CD8-positive, alpha-beta T cell (primary cell): ENCODE measurements at regions of chr19 and their contacts with region 1.

Region 1: GRCh38 chr19:6737284-6738046 is at the start of gene GPR108:
- DNase-seq: peak; percentile 98 to 100 (median 99)
- ATAC-seq: peak; percentile 74
- H3K4me3 ChIP-seq: peak within 1 kb of the TSS; percentile 83
- H3K4me3 Mint-ChIP-seq: peak within 1 kb of the TSS; percentile 96
- H3K27ac ChIP-seq: peak within 1 kb of the TSS; percentile 80 to 92
- H3K27ac Mint-ChIP-seq: peak within 1 kb of the TSS; percentile 97
- H3K4me1 ChIP-seq: peaks cover 42% of the 10 kb centered on the region
- H3K4me1 Mint-ChIP-seq: peaks cover 34% of the 10 kb centered on the region
- H3K27me3 ChIP-seq: peaks cover 0 to 3% of the 10 kb centered on the region in 2 experiments
- H3K27me3 Mint-ChIP-seq: no peaks in the 10 kb centered on the region
- CTCF ChIP-seq: no peak
- total RNA-seq, gene GPR108: 31.9 to 33.1 TPM

Region 2: GRCh38 chr19:5790573-5791520 is 946.6 kb before region 1 on chr19 and contains the start of gene DUS3L:
- CTCF ChIA-PET with region 1: no interaction called
- POLR2A ChIA-PET with region 1: no interaction called
- intact Hi-C with region 1: loop called in 1 of 2 experiments (anchors 5 kb)
- DNase-seq: peak; percentile 91 to 98 (median 94)
- ATAC-seq: peak; percentile 95
- H3K4me3 ChIP-seq: peak within 1 kb of the TSS; percentile 86 to 91
- H3K4me3 Mint-ChIP-seq: peak within 1 kb of the TSS; percentile 97
- H3K27ac ChIP-seq: peak within 1 kb of the TSS; percentile 94 to 97
- H3K27ac Mint-ChIP-seq: peak within 1 kb of the TSS; percentile 99
- H3K4me1 ChIP-seq: peaks cover 7% of the 10 kb centered on the region
- H3K4me1 Mint-ChIP-seq: peaks cover 17% of the 10 kb centered on the region
- H3K27me3 ChIP-seq: no peaks in the 10 kb centered on the region
- H3K27me3 Mint-ChIP-seq: peaks cover 2% of the 10 kb centered on the region
- CTCF ChIP-seq: no peak
- total RNA-seq, gene DUS3L: 174 to 192 TPM

Region 3: DNA sequence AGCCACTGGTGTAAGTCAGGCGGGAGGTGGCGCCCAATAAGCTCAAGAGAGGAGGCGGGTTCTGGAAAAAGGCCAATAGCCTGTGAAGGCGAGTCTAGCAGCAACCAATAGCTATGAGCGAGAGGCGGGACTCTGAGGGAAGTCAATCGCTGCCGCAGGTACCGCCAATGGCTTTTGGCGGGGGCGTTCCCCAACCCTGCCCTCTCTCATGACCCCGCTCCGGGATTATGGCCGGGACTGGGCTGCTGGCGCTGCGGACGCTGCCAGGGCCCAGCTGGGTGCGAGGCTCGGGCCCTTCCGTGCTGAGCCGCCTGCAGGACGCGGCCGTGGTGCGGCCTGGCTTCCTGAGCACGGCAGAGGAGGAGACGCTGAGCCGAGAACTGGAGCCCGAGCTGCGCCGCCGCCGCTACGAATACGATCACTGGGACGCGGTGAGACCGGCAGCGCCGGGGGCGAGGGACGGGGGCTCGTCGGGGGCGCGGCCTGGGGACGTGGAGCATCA is 364.8 kb before region 1 on chr19 and contains the start of gene ALKBH7:
- CTCF ChIA-PET with region 1: interaction called, 3 read pairs
- POLR2A ChIA-PET with region 1: no interaction called
- intact Hi-C with region 1: loop called (anchors 1 to 5 kb)
- DNase-seq: peak; percentile 90 to 100 (median 95)
- ATAC-seq: peak; percentile 75
- H3K4me3 ChIP-seq: peak within 1 kb of the TSS; percentile 67 to 86
- H3K4me3 Mint-ChIP-seq: peak within 1 kb of the TSS; percentile 92
- H3K27ac ChIP-seq: peak within 1 kb of the TSS; percentile 70 to 93
- H3K27ac Mint-ChIP-seq: peak within 1 kb of the TSS; percentile 93
- H3K4me1 ChIP-seq: peaks cover 12% of the 10 kb centered on the region
- H3K4me1 Mint-ChIP-seq: peaks cover 14% of the 10 kb centered on the region
- H3K27me3 ChIP-seq: no peaks in the 10 kb centered on the region
- H3K27me3 Mint-ChIP-seq: no peaks in the 10 kb centered on the region
- CTCF ChIP-seq: no peak
- total RNA-seq, gene ALKBH7: 63.6 to 66.2 TPM

Region 4: DNA sequence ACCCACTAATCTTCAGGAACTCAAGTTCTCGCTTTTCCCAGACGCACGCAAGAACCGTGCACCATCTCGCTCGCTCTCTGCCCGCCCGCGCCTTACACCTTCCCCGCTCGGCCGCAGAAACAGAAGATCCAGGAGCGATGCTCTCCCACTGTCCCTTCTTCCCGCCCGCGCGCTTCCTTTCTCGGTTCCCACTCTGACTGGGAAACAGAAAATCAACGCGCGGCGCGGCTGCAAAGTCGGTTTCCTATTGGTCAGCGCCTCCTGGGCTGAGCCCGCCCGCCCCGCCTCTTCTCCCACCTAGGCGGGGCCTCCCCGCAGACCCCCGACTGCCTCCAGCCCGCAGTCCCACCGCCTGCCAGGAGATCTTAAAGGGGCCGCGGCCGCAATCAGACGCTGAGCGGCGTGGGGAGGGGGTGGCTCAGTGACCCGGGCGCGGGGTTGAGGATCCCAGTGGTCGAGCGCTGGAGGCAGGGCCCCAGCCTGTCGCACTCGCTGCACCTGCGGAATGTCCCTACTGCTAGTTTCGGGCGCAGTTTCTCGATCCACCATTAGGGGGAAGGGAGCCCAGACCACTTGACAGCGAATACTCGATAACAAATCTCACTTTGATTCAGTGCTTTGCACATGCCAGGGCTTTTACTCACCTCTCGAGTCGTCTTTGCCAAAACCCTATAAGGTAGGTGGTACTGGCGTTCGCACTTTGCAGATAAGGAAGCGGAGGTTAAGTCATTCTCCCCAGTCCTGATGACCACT is 277.2 kb before region 1 on chr19:
- CTCF ChIA-PET with region 1: no interaction called
- POLR2A ChIA-PET with region 1: interaction called, 3 read pairs
- intact Hi-C with region 1: loop called in 1 of 2 experiments (anchors 1 kb)
- DNase-seq: peak; percentile 93 to 98 (median 96)
- ATAC-seq: peak; percentile 85
- H3K4me3 ChIP-seq: peak overlapping the region; percentile 73 to 87
- H3K4me3 Mint-ChIP-seq: peak overlapping the region; percentile 94
- H3K27ac ChIP-seq: peak overlapping the region; percentile 62 to 69
- H3K27ac Mint-ChIP-seq: peak overlapping the region; percentile 81
- H3K4me1 ChIP-seq: peaks cover 20% of the 10 kb centered on the region
- H3K4me1 Mint-ChIP-seq: peaks cover 32% of the 10 kb centered on the region
- H3K27me3 ChIP-seq: peaks cover 0 to 3% of the 10 kb centered on the region in 2 experiments
- H3K27me3 Mint-ChIP-seq: no peaks in the 10 kb centered on the region
- CTCF ChIP-seq: peak; percentile 54

Region 5: DNA sequence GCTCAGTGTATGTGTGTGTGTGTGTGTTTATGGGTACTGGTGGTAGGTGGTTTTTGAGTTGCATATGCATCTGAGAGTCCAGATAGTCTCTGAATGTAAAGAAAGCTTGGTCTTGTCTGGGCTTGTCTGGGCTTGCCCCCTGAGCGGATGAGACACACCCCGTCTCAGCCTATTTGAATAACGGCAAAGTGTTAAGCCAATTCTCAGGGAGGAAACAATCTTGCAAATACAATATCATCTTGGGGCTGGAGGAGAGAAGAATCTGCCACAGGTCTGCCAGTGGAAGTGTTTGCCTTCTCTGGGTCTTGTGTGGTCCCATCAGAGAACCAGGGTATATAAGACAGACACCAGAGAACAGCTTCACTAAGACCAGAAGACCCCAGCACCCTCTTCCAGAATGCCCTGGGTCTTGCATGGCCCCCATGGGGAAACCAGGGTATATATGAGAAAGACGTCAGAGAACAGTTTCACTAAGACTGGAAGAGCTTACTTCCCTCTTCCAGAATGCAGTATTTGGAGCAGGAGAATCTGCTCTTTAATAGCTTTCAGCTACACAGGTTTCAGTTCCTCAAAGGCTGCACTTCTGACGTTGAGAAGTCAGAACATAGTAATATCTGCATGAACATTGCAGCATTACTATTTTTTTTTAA is 159.9 kb before region 1 on chr19:
- CTCF ChIA-PET with region 1: no interaction called
- POLR2A ChIA-PET with region 1: no interaction called
- intact Hi-C with region 1: no loop called
- DNase-seq: peak in 1 of 9 experiments; percentile 30
- ATAC-seq: peak; percentile 20
- H3K4me3 ChIP-seq: no peak overlapping the region
- H3K4me3 Mint-ChIP-seq: no peak overlapping the region
- H3K27ac ChIP-seq: no peak overlapping the region
- H3K27ac Mint-ChIP-seq: no peak overlapping the region
- H3K4me1 ChIP-seq: no peaks in the 10 kb centered on the region
- H3K4me1 Mint-ChIP-seq: no peaks in the 10 kb centered on the region
- H3K27me3 ChIP-seq: peaks cover 0 to 2% of the 10 kb centered on the region in 2 experiments
- H3K27me3 Mint-ChIP-seq: peaks cover 2% of the 10 kb centered on the region
- CTCF ChIP-seq: no peak

Region 6: GRCh38 chr19:6632002-6632621 is 105.4 kb before region 1 on chr19:
- CTCF ChIA-PET with region 1: interaction called, 38 read pairs
- POLR2A ChIA-PET with region 1: interaction called, 3 read pairs
- intact Hi-C with region 1: loop called (anchors 1 kb)
- DNase-seq: peak; percentile 52 to 90 (median 84)
- ATAC-seq: peak; percentile 96
- H3K4me3 ChIP-seq: no peak overlapping the region
- H3K4me3 Mint-ChIP-seq: no peak overlapping the region
- H3K27ac ChIP-seq: no peak overlapping the region
- H3K27ac Mint-ChIP-seq: no peak overlapping the region
- H3K4me1 ChIP-seq: no peaks in the 10 kb centered on the region
- H3K4me1 Mint-ChIP-seq: peaks cover 12% of the 10 kb centered on the region
- H3K27me3 ChIP-seq: no peaks in the 10 kb centered on the region
- H3K27me3 Mint-ChIP-seq: peaks cover 3% of the 10 kb centered on the region
- CTCF ChIP-seq: peak; percentile 85

Region 7: DNA sequence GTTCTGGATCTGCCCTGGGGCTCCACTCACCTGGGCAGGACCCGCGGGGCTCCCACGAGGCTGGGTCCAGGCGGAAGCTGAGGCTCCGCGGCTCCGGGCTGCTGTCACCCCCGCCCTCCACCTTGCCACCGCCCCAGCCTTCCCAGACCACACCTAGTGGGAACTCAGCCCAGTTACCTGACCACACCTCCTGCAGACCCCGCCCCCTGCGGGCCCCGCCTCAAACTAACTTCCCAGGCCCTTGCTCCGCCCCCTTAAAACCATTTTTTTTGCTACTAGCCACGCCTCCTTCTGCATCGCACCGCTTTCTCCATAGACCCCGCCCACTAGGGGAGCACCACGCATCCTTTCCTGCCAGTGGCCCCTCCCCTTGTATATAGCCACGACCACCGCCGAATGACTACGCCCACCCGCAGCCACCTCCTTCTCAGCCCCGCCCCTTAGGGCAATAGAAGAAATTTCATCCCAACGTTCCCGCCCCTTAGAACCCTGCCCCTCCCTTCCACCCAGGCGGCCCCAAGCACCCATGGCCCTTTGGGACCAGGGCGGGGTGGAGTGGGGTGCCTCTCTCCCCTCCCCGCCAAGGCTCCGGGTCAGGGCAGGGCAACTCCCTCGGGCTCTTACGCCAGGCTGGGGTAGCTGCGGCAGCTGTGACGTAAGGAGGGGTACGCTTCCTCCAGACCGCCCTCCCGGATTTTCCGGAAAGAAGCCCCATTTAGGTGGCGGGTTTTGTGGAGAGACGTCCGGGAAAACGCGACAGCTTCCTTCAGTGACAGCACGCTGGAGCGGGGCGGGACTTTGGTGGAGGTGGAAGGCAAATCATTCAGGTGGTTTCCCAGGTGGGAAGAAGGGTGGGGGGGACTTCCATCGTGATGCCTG is 30.1 kb after region 1 on chr19 and contains the start of gene SH2D3A:
- CTCF ChIA-PET with region 1: interaction called, 9 read pairs
- POLR2A ChIA-PET with region 1: interaction called, 11 read pairs
- intact Hi-C with region 1: loop called (anchors 1 kb)
- DNase-seq: peak; percentile 88 to 99 (median 96)
- ATAC-seq: peak; percentile 74
- H3K4me3 ChIP-seq: peak within 1 kb of the TSS; percentile 57 to 58
- H3K4me3 Mint-ChIP-seq: peak within 1 kb of the TSS; percentile 87
- H3K27ac ChIP-seq: peak within 1 kb of the TSS; percentile 84 to 97
- H3K27ac Mint-ChIP-seq: peak within 1 kb of the TSS; percentile 97
- H3K4me1 ChIP-seq: peaks cover 43% of the 10 kb centered on the region
- H3K4me1 Mint-ChIP-seq: peaks cover 50% of the 10 kb centered on the region
- H3K27me3 ChIP-seq: no peaks in the 10 kb centered on the region
- H3K27me3 Mint-ChIP-seq: no peaks in the 10 kb centered on the region
- CTCF ChIP-seq: no peak
- total RNA-seq, gene SH2D3A: 33.5 to 38.8 TPM

Region 8: GRCh38 chr19:7069042-7069903 is 331.8 kb after region 1 on chr19 and contains the start of gene ZNF557:
- CTCF ChIA-PET with region 1: no interaction called
- POLR2A ChIA-PET with region 1: no interaction called
- intact Hi-C with region 1: loop called in 1 of 2 experiments (anchors 10 kb)
- DNase-seq: peak; percentile 98 to 99 (median 99)
- ATAC-seq: peak; percentile 97
- H3K4me3 ChIP-seq: peak within 1 kb of the TSS; percentile 76 to 99
- H3K4me3 Mint-ChIP-seq: peak within 1 kb of the TSS; percentile 94
- H3K27ac ChIP-seq: peak within 1 kb of the TSS; percentile 81 to 95
- H3K27ac Mint-ChIP-seq: peak within 1 kb of the TSS; percentile 96
- H3K4me1 ChIP-seq: peaks cover 21% of the 10 kb centered on the region
- H3K4me1 Mint-ChIP-seq: peaks cover 25% of the 10 kb centered on the region
- H3K27me3 ChIP-seq: no peaks in the 10 kb centered on the region
- H3K27me3 Mint-ChIP-seq: no peaks in the 10 kb centered on the region
- CTCF ChIP-seq: no peak
- total RNA-seq, gene ZNF557: 19.7 to 20.0 TPM